A549 (cell line): ENCODE measurements at regions of chr5 and their contacts with region 1.

Region 1: DNA sequence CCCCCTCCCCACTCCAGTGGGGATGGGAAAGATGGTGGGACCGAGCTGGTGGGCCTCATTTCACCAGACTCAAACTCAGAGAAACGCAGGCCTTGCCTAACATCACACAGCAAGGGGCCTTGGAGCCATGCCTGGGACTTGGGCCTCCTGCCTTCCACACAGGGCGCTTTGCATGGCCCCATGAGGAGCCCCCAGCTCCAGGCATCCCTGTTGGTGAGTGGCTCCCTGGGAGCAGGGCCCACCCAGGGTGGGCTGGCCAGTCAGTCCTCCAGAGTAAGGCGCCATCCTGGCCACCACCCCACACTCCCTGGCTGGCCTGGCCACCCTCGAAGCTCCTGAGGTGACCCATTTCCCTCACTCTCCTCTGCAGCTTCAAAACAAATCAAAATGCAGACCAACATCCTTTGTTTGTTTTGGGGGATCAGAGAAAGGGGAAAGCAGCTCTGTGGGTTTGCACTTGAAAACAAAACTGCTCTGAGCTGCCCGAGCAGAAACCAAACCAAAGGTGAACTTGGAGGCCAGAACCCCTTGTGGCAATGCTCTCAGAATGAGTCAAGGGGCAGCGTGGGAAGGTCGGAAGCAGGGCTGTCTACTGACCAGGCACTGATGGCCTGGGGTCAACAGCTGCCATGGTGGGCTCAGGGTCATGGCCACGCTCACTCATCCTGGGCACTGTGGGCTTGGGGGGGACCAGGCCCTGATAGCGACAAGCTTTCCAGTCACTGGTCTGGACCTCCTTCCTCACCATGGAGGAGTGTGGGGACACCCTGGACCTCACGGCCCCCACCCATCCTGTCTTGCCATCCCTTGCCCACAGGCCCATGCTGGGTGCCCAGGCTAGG is 37.0 kb upstream of the VDAC1 start:
- DNase-seq: no peak
- ATAC-seq: no peak
- H3K4me3 ChIP-seq: no peak overlapping the region
- H3K27ac ChIP-seq: no peak overlapping the region
- H3K4me1 ChIP-seq: no peaks in the 10 kb centered on the region
- CTCF ChIP-seq: no peak
- EP300 ChIP-seq: no peak
- POLR2A ChIP-seq: no peak
- RAD21 ChIP-seq: no peak

Region 2: DNA sequence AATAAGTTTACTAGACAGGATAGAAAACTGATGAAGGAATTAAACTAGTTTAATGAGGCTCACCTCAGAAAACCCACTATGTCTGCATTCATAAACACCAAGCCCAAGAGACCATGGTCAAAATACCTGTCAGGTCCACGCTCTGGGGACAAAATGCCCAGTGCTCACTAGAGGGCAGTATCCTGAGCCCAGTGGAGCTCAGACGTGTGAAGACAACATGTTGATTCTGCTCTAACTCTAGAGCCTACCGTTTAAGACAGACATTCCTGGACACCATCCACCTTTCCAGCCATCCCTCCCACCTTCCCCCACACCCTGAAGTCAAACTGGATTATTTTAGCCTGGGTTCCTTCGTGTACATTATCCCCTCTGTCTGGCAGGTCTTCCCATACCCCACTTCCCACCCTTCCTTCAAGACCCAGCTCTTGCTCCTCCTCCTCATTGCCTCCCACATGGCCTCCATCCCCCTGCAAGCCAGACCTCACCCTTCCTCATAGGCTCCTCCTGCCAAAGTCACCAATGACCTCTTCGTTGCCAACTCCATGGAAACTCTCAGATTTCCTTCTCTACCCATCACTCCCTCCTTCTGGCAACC is 287.1 kb before region 1 on chr5:
- CTCF ChIA-PET with region 1: no interaction called
- POLR2A ChIA-PET with region 1: no interaction called
- DNase-seq: peak; percentile 44 to 53
- ATAC-seq: peak; percentile 57 to 92; a peak in 4 of 6 replicates
- H3K4me3 ChIP-seq: no peak overlapping the region
- H3K27ac ChIP-seq: no peak overlapping the region
- H3K4me1 ChIP-seq: no peaks in the 10 kb centered on the region
- CTCF ChIP-seq: peak; percentile 51
- EP300 ChIP-seq: no peak
- POLR2A ChIP-seq: no peak
- RAD21 ChIP-seq: peak; percentile 31 to 49; a peak in 3 of 5 replicates

Region 3: GRCh38 chr5:133985540-133986180 is 56.1 kb before region 1 on chr5:
- CTCF ChIA-PET with region 1: interaction called, 12 read pairs
- POLR2A ChIA-PET with region 1: no interaction called
- DNase-seq: no peak
- ATAC-seq: no peak
- H3K4me3 ChIP-seq: no peak overlapping the region
- H3K27ac ChIP-seq: no peak overlapping the region
- H3K4me1 ChIP-seq: peaks cover 7% of the 10 kb centered on the region; the same call in 2 of the 3 replicates
- CTCF ChIP-seq: no peak
- EP300 ChIP-seq: no peak
- POLR2A ChIP-seq: no peak
- RAD21 ChIP-seq: no peak

Region 4: DNA sequence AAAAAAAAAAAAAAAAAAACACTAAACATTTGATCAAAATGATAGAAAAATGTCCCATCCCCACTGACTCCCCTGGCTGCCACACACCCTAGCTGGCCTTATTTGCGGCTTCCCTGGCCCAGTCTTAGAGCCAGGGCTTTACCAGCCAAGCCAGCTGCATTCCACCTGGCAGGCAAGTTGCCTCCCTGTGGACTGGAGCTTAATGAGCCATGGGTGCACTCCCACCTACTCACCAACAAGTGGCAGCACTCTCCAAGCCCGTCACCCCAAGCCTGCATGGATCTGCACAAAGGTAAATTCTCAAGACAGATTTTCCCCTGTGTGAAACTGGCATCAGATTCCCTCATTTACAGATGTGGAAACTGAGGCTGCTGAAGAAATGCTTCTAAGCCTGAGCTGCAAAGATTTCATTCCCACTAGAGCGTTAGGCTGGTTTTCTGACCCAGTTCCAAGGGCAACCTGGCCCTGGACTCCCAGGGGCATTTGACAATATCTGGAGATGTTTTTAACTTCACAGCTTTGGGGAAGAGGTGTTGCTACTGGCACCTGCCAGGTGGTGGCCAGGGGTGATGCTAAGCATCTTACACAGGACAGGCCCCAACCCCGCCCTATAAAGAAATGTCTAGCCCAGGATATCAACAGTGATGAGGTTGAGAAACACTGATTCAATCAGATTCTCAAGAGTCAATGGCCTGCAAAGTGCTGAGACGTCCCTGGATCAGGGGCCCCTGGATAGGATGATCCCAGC is 15.1 kb before region 1 on chr5:
- CTCF ChIA-PET with region 1: interaction called, 161 read pairs
- POLR2A ChIA-PET with region 1: no interaction called
- DNase-seq: peak; percentile 86 to 94
- ATAC-seq: peak; percentile 95 to 97
- H3K4me3 ChIP-seq: no peak overlapping the region
- H3K27ac ChIP-seq: peak overlapping the region in 1 of 2 experiments; percentile 59; a peak in 3 of 6 replicates
- H3K4me1 ChIP-seq: peaks cover 32% of the 10 kb centered on the region
- CTCF ChIP-seq: peak; percentile 55
- EP300 ChIP-seq: no peak
- POLR2A ChIP-seq: no peak
- RAD21 ChIP-seq: peak; percentile 52 to 70

Region 5: GRCh38 chr5:134086943-134087305 is 45.1 kb after region 1 on chr5:
- CTCF ChIA-PET with region 1: interaction called, 14 read pairs
- POLR2A ChIA-PET with region 1: no interaction called
- DNase-seq: no peak
- ATAC-seq: no peak
- H3K4me3 ChIP-seq: no peak overlapping the region
- H3K27ac ChIP-seq: no peak overlapping the region
- H3K4me1 ChIP-seq: peaks cover 3% of the 10 kb centered on the region; the same call in 1 of the 3 replicates
- CTCF ChIP-seq: no peak
- EP300 ChIP-seq: no peak
- POLR2A ChIP-seq: no peak
- RAD21 ChIP-seq: no peak

Region 6: GRCh38 chr5:134140530-134141201 is 98.9 kb after region 1 on chr5:
- CTCF ChIA-PET with region 1: interaction called, 546 read pairs
- POLR2A ChIA-PET with region 1: interaction called, 10 read pairs
- DNase-seq: peak; percentile 65 to 78
- ATAC-seq: peak; percentile 64 to 87
- H3K4me3 ChIP-seq: no peak overlapping the region
- H3K27ac ChIP-seq: peak overlapping the region in 1 of 2 experiments; percentile 48; a peak in 2 of 6 replicates
- H3K4me1 ChIP-seq: peaks cover 17% of the 10 kb centered on the region
- CTCF ChIP-seq: peak; percentile 81
- EP300 ChIP-seq: no peak
- POLR2A ChIP-seq: no peak
- RAD21 ChIP-seq: peak; percentile 49 to 57; a peak in 4 of 5 replicates

Region 7: DNA sequence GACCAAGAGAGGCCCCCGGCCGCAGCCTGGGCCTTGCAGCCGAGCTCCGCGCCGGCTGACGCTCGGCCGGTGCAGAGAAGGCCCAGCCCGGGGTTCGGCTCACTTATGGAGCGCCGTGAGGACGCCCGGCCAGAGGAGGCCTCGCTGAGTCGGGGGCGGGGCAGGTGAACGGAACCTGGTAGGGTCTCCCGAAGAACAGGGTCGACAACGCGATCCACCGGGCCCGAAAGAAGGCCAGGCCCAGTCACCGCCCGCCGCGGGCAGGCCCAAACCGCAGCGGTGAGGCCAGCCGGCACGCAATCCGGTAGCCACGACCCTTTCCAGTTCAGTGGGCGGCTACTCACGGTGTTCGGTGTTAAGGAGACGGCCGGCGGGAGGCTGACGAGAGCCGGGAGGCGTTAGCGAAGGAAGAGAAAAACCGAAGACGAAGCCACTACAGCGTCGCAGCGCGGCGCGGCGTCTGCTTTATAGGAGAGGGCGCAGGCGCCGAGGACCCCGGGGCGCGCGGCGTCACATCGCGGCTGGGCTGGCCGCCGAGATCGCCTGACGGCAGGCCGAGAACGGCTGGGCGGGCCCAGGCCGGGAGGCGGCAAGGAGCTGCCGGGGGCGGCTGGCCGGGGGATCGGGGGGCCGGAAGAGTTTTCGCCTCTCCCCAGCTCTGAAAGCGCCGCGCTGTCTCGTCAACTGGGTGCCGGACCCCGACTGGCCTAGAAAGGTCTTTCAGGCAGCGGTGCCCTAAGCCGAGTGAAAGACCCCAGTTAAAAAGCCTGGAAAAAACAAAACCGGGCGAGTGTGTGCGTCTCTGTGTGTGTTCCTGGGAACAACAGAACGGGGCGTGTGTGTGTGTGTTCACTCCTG is 134.9 kb after region 1 on chr5 and contains the start of gene SKP1:
- CTCF ChIA-PET with region 1: interaction called, 14 read pairs
- POLR2A ChIA-PET with region 1: interaction called, 10 read pairs
- DNase-seq: peak; percentile 58 to 88
- ATAC-seq: peak; percentile 84 to 89
- H3K4me3 ChIP-seq: peak within 1 kb of the TSS; percentile 89
- H3K27ac ChIP-seq: peak within 1 kb of the TSS; percentile 94 to 98
- H3K4me1 ChIP-seq: peaks cover 19% of the 10 kb centered on the region; the same call in 2 of the 3 replicates
- CTCF ChIP-seq: no peak
- EP300 ChIP-seq: no peak
- POLR2A ChIP-seq: peak; percentile 98
- RAD21 ChIP-seq: no peak
- polyA plus RNA-seq, gene SKP1: 608 and 776 TPM in 2 replicates